ENCODE measurements at regions of chr3 and their contacts with region 1.

Region 1: DNA sequence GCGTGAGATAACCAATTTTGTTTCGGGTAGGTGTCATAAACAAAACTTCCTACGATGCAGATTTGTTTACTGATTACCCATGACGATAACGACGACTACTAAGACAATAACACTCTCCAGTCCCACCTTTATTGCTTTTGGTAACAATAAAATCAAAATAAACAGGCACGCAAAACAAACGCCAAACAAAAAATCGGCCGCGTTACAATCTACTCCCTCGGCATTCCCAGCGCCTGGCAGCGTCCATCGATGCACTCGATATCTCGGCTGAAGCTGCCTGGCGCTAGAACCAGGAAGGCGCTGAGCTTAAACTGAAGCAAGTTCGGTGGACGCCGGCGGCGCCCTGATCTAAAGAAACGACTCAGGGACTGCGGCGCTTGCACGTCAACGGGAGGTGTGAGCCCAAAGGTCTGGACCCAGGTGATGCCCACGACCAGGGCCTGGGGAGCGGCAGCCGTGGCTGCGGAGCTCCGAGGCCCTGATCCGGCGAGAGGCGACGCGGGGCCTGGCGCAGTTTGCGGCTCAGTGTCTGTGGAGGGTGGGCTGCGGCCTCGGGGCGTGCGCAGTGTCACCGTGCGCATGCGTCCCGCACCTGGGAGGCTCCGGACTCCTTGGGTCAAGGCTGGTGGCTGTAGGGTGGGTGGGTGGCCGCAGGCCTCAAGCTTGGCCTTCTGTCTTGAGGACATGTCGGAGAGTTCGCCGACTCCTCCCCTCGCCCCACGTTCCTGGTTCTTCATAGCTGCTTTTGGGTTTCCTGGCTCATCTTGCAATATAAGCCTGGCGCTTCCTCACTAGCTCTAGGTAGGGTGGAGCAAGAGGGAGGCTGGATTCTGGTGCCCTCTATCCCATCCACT is at the start of gene RSRC1:
- DNase-seq: peak; percentile 88
- ATAC-seq: peak; percentile 80
- H3K4me3 Mint-ChIP-seq: peak within 1 kb of the TSS; percentile 95
- H3K27ac Mint-ChIP-seq: peak within 1 kb of the TSS; percentile 81
- H3K4me1 Mint-ChIP-seq: peaks cover 52% of the 10 kb centered on the region
- H3K27me3 Mint-ChIP-seq: peaks cover 26% of the 10 kb centered on the region
- total RNA-seq, gene RSRC1: 44.9 to 61.6 TPM

Region 2: DNA sequence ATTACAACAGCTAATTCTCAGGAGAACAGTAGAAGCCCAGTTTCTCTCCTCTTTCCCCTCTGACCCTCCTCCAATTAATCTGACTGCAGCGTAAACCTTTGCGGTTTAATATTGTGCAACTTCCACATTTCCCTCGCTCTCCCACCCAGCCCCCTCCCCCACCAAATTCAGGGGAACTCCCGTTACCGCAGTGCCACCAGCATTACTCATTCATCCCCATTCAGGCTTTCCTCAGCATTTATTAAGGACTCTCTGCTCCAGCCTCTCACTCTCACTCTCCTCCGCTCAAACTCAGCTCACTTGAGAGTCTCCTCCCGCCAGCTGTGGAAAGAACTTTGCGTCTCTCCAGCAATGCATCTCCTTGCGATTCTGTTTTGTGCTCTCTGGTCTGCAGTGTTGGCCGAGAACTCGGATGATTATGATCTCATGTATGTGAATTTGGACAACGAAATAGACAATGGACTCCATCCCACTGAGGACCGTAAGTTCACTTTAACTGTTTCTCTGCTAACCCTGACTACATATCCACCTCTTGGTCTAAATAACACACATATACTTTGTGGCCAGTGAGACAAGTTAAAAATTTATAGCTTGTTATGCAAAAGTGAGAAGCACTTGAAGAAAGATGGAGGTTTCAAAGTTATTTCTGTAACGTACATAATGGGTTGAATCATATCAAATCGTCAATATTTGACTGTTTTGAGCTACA is 673.3 kb before region 1 on chr3 and contains the start of gene PTX3:
- CTCF ChIA-PET with region 1: no interaction called
- POLR2A ChIA-PET with region 1: no interaction called
- intact Hi-C with region 1: loop called in 1 of 2 experiments (anchors 10 kb)
- DNase-seq: peak; percentile 25
- ATAC-seq: peak; percentile 39
- H3K4me3 Mint-ChIP-seq: peak within 1 kb of the TSS; percentile 50
- H3K27ac Mint-ChIP-seq: no peak within 1 kb of the TSS
- H3K4me1 Mint-ChIP-seq: peaks cover 13% of the 10 kb centered on the region
- H3K27me3 Mint-ChIP-seq: peaks cover 35% of the 10 kb centered on the region
- total RNA-seq, gene PTX3: 0.18 to 0.23 TPM

Region 3: GRCh38 chr3:158091531-158091930 is 18.5 kb before region 1 on chr3:
- CTCF ChIA-PET with region 1: interaction called, 6 read pairs
- POLR2A ChIA-PET with region 1: no interaction called
- intact Hi-C with region 1: loop called in 1 of 2 experiments (anchors 2 kb)
- DNase-seq: no peak
- ATAC-seq: no peak
- H3K4me3 Mint-ChIP-seq: no peak overlapping the region
- H3K27ac Mint-ChIP-seq: no peak overlapping the region
- H3K4me1 Mint-ChIP-seq: peaks cover 4% of the 10 kb centered on the region
- H3K27me3 Mint-ChIP-seq: peaks cover 64% of the 10 kb centered on the region

Region 4: GRCh38 chr3:158167737-158168471 is 57.9 kb after region 1 on chr3:
- CTCF ChIA-PET with region 1: no interaction called
- POLR2A ChIA-PET with region 1: no interaction called
- intact Hi-C with region 1: no loop called
- DNase-seq: peak; percentile 20
- ATAC-seq: peak; percentile 80
- H3K4me3 Mint-ChIP-seq: no peak overlapping the region
- H3K27ac Mint-ChIP-seq: no peak overlapping the region
- H3K4me1 Mint-ChIP-seq: peaks cover 8% of the 10 kb centered on the region
- H3K27me3 Mint-ChIP-seq: no peaks in the 10 kb centered on the region

Region 5: DNA sequence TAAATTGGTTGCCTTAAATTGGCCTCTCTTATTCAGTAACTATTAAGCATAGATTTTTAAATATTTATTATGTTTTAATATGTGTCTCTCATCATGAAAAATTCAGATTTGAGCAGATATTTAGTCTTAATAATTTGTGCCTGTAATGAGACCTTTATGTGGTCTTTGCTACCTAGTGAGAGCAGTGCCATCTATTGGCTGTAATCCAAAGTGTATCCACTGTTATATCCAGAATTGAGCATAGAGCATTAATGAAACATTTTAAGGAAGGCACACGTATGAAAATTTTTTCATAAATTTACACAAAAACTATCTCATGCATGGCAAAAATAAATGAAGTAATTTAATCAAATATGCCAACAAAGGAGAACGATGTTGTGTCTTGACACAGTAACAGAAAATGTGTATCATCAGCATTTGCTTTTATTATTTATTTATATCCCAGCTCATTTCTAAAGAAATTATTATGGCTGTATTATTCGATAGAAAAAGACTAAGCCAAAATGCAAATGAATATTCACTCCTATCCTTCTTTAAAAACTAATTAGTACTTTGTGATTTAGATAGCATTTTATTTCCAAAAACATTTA is 203.4 kb after region 1 on chr3:
- CTCF ChIA-PET with region 1: no interaction called
- POLR2A ChIA-PET with region 1: no interaction called
- intact Hi-C with region 1: loop called in 1 of 2 experiments (anchors 5 kb)
- DNase-seq: no peak
- ATAC-seq: no peak
- H3K4me3 Mint-ChIP-seq: no peak overlapping the region
- H3K27ac Mint-ChIP-seq: no peak overlapping the region
- H3K4me1 Mint-ChIP-seq: no peaks in the 10 kb centered on the region
- H3K27me3 Mint-ChIP-seq: no peaks in the 10 kb centered on the region

Region 6: GRCh38 chr3:158384019-158384418 is 274.0 kb after region 1 on chr3:
- CTCF ChIA-PET with region 1: no interaction called
- POLR2A ChIA-PET with region 1: no interaction called
- intact Hi-C with region 1: no loop called
- DNase-seq: no peak
- ATAC-seq: peak; percentile 49
- H3K4me3 Mint-ChIP-seq: no peak overlapping the region
- H3K27ac Mint-ChIP-seq: no peak overlapping the region
- H3K4me1 Mint-ChIP-seq: no peaks in the 10 kb centered on the region
- H3K27me3 Mint-ChIP-seq: no peaks in the 10 kb centered on the region

Region 7: DNA sequence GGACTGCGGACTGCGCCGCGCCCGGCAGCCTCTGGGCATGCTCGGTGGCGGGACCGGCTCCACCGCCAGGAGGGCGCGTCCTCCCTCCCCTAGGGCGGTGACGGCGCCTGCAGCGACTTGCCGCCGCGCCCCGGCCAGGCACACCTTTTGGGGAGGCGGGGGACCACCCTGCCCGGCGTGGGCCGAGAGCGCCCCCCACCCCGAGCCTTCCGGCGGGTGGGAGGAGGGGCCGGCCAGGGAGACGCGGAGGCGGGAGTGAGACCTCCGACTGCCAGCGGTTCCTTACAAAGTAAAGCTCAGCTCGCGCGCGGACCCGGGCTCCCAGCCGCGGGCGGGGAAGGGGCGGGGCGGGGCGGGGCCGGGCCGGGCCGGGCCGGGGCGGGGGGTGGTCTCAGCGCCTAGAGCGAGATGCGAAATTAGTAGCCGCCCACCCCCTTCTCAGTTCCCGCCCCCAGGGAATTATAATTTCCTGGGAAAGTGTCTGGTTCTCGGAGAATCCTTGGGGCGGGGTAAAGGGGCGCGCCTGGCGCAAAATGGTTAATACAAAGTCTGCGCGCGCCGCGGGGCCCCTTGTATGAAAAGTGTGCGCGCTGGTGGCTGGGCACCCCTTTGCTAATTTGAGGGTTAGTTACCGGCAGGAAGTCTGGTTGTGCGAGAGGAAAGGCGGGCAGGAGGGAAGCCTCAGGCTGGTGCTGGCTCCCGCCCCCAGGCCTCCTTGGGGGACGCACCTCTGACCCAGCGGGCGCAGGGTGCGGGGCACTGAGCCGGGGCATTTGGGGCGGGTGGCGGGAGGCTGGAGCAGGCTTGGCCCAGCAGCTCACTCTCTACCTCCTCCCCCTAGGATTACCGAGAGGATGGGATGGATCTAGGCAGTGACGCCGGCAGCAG is 1653.8 kb after region 1 on chr3:
- CTCF ChIA-PET with region 1: no interaction called
- POLR2A ChIA-PET with region 1: no interaction called
- intact Hi-C with region 1: loop called in 1 of 2 experiments (anchors 5 kb)
- DNase-seq: peak; percentile 64
- ATAC-seq: peak; percentile 80
- H3K4me3 Mint-ChIP-seq: peak overlapping the region; percentile 61
- H3K27ac Mint-ChIP-seq: no peak overlapping the region
- H3K4me1 Mint-ChIP-seq: peaks cover 12% of the 10 kb centered on the region
- H3K27me3 Mint-ChIP-seq: peaks cover 52% of the 10 kb centered on the region